Lower lobe of right lung (tissue), 2 donors: ENCODE measurements at regions of chr11 and their contacts with region 1.

Region 1: DNA sequence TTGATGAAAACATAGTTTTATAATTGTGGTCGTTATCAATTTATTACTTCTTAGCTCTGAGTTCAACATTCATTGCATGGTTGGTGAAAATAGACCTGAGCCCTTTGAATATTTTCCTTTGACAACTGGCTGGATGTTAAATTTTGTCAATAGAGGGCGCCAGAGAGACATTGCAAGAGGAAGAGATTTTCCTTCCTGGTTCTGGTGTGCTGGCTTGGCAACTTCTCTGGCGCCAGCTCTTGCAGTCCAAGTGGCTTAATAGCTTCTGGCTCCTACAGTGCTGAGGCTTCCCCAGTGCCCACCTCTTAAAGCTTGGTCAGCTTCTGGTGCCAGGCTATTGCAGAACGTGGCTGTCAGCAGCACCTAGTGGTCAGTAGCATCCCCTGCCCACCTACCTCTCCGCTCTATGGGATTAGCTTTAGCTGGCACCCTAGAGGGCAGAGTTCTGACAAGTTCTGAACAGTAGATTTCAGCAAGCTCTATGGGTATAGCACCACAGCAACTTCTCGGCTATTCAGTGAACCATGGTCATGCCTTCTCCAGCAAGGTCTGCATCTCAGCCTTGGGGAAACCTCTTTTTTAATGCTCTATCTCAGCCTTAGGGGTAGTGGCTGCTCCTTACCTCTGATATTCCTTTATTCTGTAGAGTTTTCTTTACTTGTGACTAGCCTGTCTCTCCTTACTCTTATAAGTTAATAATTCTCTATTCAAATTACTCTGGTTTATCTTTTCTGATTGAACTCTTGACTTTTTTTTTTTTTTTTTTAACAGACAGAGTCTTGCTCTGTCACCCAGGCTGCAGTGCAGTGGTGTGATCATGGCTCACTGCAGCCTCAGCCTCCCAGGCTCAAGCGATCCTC is 59.4 kb downstream of the ACER3 start:
- DNase-seq: peak; percentile 75
- ATAC-seq: peak; percentile 94 to 96
- H3K4me3 ChIP-seq: no peak overlapping the region
- H3K27ac ChIP-seq: peak overlapping the region; percentile 16
- H3K4me1 ChIP-seq: peaks cover 20% of the 10 kb centered on the region
- H3K27me3 ChIP-seq: no peaks in the 10 kb centered on the region
- CTCF ChIP-seq: peak; percentile 88

Region 2: GRCh38 chr11:76644591-76644990 is 275.5 kb before region 1 on chr11:
- intact Hi-C with region 1: no loop called
- DNase-seq: no peak
- ATAC-seq: no peak
- H3K4me3 ChIP-seq: no peak overlapping the region
- H3K27ac ChIP-seq: no peak overlapping the region
- H3K4me1 ChIP-seq: no peaks in the 10 kb centered on the region
- H3K27me3 ChIP-seq: no peaks in the 10 kb centered on the region
- CTCF ChIP-seq: no peak

Region 3: DNA sequence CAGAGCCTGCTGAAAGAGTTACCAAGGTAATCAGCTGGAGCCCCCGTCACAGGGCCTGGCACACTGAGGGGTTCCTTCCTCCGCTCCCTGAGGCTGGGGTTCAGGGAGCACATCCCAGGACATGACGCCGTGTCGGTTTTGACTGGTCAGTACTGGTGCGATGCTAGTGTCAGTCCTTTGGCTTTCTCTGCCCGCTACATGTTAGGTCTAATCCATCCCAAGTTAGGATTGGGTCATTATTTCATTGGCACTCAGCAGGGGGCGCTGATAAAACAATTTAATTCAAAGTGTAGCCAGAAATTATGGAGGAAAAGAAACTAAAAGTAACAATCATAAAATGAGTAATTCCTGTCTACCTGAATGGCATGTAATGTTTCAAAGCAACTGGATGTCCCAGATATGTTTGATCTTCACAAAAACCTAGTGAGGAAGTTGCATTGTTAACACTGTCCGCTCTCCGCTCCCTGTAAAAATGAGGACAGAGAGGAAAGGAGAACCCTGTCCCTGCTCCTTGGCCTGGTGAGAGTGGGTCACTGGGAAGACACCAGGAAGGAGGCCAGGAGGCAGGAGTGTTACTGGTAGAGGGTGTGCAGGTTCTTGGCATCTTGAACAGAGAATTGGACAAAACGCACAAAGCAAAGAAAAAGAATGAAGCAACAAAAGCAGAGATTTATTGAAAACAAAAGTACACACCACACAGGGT is 109.8 kb before region 1 on chr11:
- intact Hi-C with region 1: loop called (anchors 5 kb)
- DNase-seq: no peak
- ATAC-seq: peak; percentile 62 to 71
- H3K4me3 ChIP-seq: no peak overlapping the region
- H3K27ac ChIP-seq: peak overlapping the region; percentile 46
- H3K4me1 ChIP-seq: peaks cover 21% of the 10 kb centered on the region
- H3K27me3 ChIP-seq: no peaks in the 10 kb centered on the region
- CTCF ChIP-seq: peak; percentile 67

Region 4: GRCh38 chr11:76860539-76861475 is 59.3 kb before region 1 on chr11 and contains the start of gene ACER3:
- intact Hi-C with region 1: no loop called
- DNase-seq: peak; percentile 97
- ATAC-seq: peak; percentile 98 to 99
- H3K4me3 ChIP-seq: peak within 1 kb of the TSS; percentile 76
- H3K27ac ChIP-seq: peak within 1 kb of the TSS; percentile 90
- H3K4me1 ChIP-seq: peaks cover 53% of the 10 kb centered on the region
- H3K27me3 ChIP-seq: no peaks in the 10 kb centered on the region
- CTCF ChIP-seq: no peak
- total RNA-seq, gene ACER3: 67.2 TPM